ENCODE measurements at regions of chr3 and their contacts with region 1.

Region 1: GRCh38 chr3:102095383-102095782 is 246.1 kb downstream of the NFKBIZ start:
- DNase-seq: no peak
- H3K4me3 ChIP-seq: no peak overlapping the region
- H3K27ac ChIP-seq: no peak overlapping the region
- H3K4me1 ChIP-seq: no peaks in the 10 kb centered on the region
- H3K27me3 ChIP-seq: no peaks in the 10 kb centered on the region
- CTCF ChIP-seq: no peak
- POLR2A ChIP-seq: no peak

Region 2: DNA sequence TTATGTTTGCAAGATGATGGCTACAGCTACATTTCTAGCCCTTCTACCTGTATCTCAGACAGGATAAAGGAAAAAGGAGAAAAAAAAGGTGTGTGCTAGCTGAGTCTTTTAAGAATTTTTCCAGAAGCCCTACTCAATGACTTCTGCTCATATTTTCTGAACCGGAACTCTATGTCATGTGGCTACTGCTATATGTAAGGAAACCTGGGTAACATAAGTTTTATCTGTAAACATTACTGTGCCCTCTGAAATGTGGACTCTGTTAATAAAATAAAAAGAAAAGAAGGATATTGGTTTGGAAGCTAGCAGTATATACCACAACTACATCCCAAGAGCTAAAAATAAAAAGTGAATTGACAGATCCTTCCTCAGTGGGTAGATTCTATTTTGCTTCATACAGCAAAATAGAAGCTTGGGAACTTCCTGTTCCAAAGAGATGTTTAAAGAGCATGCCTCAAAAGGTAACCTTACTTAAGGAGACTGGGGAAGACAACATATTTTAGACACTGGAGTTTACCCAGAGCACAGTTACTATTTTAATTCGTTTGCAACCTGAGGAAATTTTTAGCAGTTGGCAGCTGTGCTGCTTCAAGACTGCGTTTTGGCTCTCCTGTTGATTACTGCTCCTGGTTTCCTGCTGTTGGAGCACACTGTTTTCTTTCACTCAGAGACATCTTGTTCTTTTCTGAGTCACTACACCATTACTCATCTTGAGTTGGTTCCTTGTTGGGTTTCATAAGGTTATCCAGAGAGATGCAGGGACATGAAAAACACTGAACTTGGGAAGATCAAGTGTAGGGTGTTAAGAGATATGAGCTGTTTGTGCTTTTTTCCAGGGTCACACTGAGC is 34.6 kb after region 1 on chr3:
- intact Hi-C with region 1: loop called (anchors 2 kb)
- DNase-seq: peak in 1 of 2 donors; percentile 25
- H3K4me3 ChIP-seq: no peak overlapping the region
- H3K27ac ChIP-seq: peak overlapping the region; percentile 59 to 75
- H3K4me1 ChIP-seq: no peaks in the 10 kb centered on the region
- H3K27me3 ChIP-seq: no peaks in the 10 kb centered on the region
- CTCF ChIP-seq: no peak
- POLR2A ChIP-seq: no peak

Region 3: GRCh38 chr3:102866845-102867244 is 771.5 kb after region 1 on chr3:
- intact Hi-C with region 1: no loop called
- DNase-seq: no peak
- H3K4me3 ChIP-seq: no peak overlapping the region
- H3K27ac ChIP-seq: no peak overlapping the region
- H3K4me1 ChIP-seq: no peaks in the 10 kb centered on the region
- H3K27me3 ChIP-seq: no peaks in the 10 kb centered on the region
- CTCF ChIP-seq: no peak
- POLR2A ChIP-seq: no peak

Measured in breast epithelium (tissue), 4 donors.